ENCODE measurements at regions of chr10 and their contacts with region 1.

Region 1: DNA sequence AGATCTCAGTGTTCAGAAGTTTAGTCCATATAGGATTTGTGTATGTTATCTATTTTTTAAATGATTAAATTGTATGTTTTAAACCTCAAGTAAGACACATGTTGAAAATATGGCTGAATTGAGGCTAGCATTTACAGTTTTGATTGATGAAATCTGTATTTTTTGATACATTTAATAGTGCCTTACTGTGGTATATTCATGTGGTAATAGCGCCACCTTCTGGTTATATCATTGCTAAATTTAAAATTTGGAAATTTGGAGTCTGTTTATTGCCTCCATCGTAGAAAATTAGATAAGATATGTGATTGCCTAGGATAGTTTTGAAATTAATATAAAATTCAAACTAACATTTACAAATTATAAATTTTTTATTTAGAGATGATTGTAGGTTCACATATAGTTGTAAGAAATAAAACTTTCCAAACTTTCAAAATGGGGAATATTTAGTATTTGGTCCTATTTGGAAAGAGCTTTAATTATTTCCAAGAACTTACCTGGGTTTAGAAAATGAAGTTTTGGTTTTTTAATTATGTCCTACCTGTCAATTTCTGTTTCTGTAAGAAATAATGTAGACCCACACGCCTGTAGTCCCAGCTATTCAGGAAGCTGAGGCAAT is 19.1 kb upstream of the ARMS2 start:
- DNase-seq: no peak
- H3K4me3 ChIP-seq: no peak overlapping the region
- CTCF ChIP-seq: no peak
- POLR2A ChIP-seq: no peak

Region 2: GRCh38 chr10:122298598-122299301 is 136.6 kb before region 1 on chr10:
- intact Hi-C with region 1: loop called (anchors 5 kb)
- DNase-seq: peak; percentile 62 to 93
- H3K4me3 ChIP-seq: no peak overlapping the region
- CTCF ChIP-seq: peak in 1 of 3 donors; percentile 90
- POLR2A ChIP-seq: no peak

Region 3: GRCh38 chr10:124217906-124218804 is 1782.8 kb after region 1 on chr10:
- intact Hi-C with region 1: no loop called
- DNase-seq: peak in 1 of 2 donors; percentile 74
- H3K4me3 ChIP-seq: no peak overlapping the region
- CTCF ChIP-seq: no peak
- POLR2A ChIP-seq: no peak

Measured in lower leg skin (tissue), 4 donors.